GM12878 (cell line): ENCODE measurements at regions of chr5 and their contacts with region 1.

Region 1: GRCh38 chr5:161745392-161745791 is 59.9 kb downstream of the GABRA6 start:
- DNase-seq: no peak
- ATAC-seq: no peak
- H3K4me3 ChIP-seq: no peak overlapping the region
- H3K27ac ChIP-seq: no peak overlapping the region
- H3K4me1 ChIP-seq: no peaks in the 10 kb centered on the region
- H3K27me3 ChIP-seq: no peaks in the 10 kb centered on the region
- CTCF ChIP-seq: no peak
- EP300 ChIP-seq: no peak
- POLR2A ChIP-seq: no peak
- RAD21 ChIP-seq: no peak

Region 2: DNA sequence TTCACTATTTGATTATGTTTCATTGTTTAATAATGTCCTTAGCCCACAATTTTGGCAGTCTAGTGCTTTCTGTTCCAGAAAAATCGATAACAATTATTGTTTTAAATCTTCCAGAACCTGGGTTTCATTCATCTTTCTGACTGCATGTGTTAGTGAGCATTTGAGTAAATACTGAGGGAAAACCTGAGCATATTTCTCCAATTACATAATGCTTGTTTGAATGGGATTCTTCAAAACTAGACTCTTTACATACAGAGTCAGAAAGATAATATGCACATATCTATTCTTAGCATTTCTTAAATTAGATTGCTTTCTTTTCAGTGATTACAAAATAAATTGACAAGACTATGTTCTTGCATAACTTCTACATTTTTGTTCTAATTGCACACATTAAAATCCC is 38.0 kb before region 1 on chr5:
- CTCF ChIA-PET with region 1: no interaction called
- POLR2A ChIA-PET with region 1: interaction called, 10 read pairs
- RAD21 ChIA-PET with region 1: no interaction called
- SMC1A ChIA-PET with region 1: no interaction called
- in situ Hi-C with region 1: no loop called
- intact Hi-C with region 1: no loop called
- DNase-seq: no peak
- ATAC-seq: no peak
- H3K4me3 ChIP-seq: no peak overlapping the region
- H3K27ac ChIP-seq: no peak overlapping the region
- H3K4me1 ChIP-seq: no peaks in the 10 kb centered on the region
- H3K27me3 ChIP-seq: no peaks in the 10 kb centered on the region
- CTCF ChIP-seq: no peak
- EP300 ChIP-seq: no peak
- POLR2A ChIP-seq: no peak
- RAD21 ChIP-seq: no peak